ENCODE measurements at regions of chr10 and their contacts with region 1.

Region 1: GRCh38 chr10:103491493-103492381 is 1.8 kb upstream of the NEURL1 start:
- DNase-seq: no peak
- ATAC-seq: no peak
- H3K4me3 ChIP-seq: no peak overlapping the region
- H3K4me3 Mint-ChIP-seq: peak overlapping the region in 2 of 3 donors; percentile 1 to 83
- H3K27ac ChIP-seq: no peak overlapping the region
- H3K27ac Mint-ChIP-seq: peak overlapping the region in 1 of 2 donors; percentile 44
- H3K4me1 ChIP-seq: peaks cover 0 to 24% of the 10 kb centered on the region in 2 experiments
- H3K4me1 Mint-ChIP-seq: peaks cover 11 to 27% (median 17%) of the 10 kb centered on the region in 3 donors
- H3K27me3 ChIP-seq: peaks cover 3 to 42% of the 10 kb centered on the region in 2 experiments
- H3K27me3 Mint-ChIP-seq: peaks cover 35 to 39% of the 10 kb centered on the region in 2 donors

Region 2: DNA sequence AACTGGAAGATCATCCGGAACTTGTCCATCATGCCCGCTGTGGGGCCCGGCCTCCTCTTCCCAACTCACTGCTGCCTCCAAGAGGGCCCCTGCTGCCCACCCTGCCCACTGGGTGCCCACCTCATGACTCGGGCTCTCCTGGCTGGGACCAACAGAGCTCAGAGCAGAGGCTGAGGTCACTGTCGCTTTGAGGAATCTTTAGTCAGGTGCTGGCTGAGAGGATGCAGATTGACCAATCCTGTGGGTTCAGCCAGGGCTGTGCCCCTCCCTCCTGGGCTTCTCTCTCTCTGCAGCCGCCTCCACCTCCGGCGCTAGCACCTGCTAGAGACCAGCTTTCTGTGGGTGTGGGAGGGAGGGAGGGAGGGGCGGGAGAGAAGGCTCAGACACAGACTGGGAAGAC is 33.0 kb before region 1 on chr10 and contains the start of gene CALHM1:
- CTCF ChIA-PET with region 1: interaction called in 1 of 2 experiments, 18 read pairs
- POLR2A ChIA-PET with region 1: no interaction called
- DNase-seq: no peak
- ATAC-seq: peak in 2 of 4 experiments; percentile 36 to 41
- H3K4me3 ChIP-seq: no peak within 1 kb of the TSS
- H3K4me3 Mint-ChIP-seq: no peak within 1 kb of the TSS
- H3K27ac ChIP-seq: no peak within 1 kb of the TSS
- H3K27ac Mint-ChIP-seq: no peak within 1 kb of the TSS
- H3K4me1 ChIP-seq: peaks cover 2 to 27% of the 10 kb centered on the region in 2 experiments
- H3K4me1 Mint-ChIP-seq: peaks cover 0 to 16% (median 12%) of the 10 kb centered on the region in 3 donors
- H3K27me3 ChIP-seq: no peaks in the 10 kb centered on the region
- H3K27me3 Mint-ChIP-seq: no peaks in the 10 kb centered on the region
- total RNA-seq, gene CALHM1: not detected

Region 3: DNA sequence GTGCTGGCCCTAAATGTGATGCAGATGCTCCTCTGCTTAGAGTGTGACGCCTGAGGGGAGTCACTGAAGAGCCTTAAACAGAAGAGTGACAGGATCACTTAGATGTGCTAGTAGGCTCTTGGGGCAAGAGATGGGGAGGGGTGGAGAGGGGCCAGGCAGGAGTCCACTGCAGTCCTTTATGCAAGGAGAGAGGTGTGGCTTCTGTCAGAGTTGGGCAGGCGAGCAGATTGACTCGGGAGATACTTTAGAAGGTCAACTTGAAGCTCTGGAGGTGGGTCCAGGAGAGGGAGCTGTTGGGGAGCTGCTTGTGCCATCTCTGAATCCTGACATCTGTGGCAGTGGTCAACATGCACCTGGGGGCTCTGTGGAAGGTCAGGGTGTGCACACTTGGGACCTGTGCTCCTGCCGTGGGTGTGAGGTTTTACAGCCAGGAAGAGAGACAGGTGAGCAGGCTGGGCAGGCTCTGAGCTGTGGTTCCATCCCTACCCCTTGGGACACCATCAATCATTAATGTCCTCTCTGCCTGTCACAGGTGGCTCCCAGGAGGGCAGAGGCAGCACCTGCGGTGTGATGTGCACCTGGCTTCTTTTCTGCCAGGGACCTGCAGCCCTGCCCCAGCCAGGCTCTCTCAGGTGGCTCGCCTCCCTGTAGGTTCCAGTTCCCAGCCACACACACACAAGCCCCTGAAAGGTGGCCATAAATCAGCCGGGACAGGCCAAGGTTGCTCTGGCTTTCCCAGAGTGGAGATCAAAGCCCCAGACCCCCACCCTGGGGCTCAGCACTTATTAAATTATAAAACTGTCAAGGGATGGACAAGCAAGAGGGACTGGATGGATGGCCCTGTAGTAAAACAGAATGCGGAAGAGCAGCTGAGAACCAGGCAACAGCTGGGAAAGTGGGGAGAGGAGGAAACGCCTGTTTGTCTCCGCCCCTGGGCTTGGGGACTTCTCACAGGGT is 15.8 kb after region 1 on chr10:
- CTCF ChIA-PET with region 1: no interaction called
- POLR2A ChIA-PET with region 1: no interaction called
- DNase-seq: no peak
- ATAC-seq: no peak
- H3K4me3 ChIP-seq: no peak overlapping the region
- H3K4me3 Mint-ChIP-seq: no peak overlapping the region
- H3K27ac ChIP-seq: no peak overlapping the region
- H3K27ac Mint-ChIP-seq: no peak overlapping the region
- H3K4me1 ChIP-seq: peaks cover 0 to 21% of the 10 kb centered on the region in 2 experiments
- H3K4me1 Mint-ChIP-seq: peaks cover 7 to 11% (median 10%) of the 10 kb centered on the region in 3 donors
- H3K27me3 ChIP-seq: peaks cover 0 to 52% of the 10 kb centered on the region in 2 experiments
- H3K27me3 Mint-ChIP-seq: peaks cover 10 to 21% of the 10 kb centered on the region in 2 donors